Naive thymus-derived CD4-positive, alpha-beta T cell (primary cell): ENCODE measurements at regions of chr22 and their contacts with region 1.

Region 1: DNA sequence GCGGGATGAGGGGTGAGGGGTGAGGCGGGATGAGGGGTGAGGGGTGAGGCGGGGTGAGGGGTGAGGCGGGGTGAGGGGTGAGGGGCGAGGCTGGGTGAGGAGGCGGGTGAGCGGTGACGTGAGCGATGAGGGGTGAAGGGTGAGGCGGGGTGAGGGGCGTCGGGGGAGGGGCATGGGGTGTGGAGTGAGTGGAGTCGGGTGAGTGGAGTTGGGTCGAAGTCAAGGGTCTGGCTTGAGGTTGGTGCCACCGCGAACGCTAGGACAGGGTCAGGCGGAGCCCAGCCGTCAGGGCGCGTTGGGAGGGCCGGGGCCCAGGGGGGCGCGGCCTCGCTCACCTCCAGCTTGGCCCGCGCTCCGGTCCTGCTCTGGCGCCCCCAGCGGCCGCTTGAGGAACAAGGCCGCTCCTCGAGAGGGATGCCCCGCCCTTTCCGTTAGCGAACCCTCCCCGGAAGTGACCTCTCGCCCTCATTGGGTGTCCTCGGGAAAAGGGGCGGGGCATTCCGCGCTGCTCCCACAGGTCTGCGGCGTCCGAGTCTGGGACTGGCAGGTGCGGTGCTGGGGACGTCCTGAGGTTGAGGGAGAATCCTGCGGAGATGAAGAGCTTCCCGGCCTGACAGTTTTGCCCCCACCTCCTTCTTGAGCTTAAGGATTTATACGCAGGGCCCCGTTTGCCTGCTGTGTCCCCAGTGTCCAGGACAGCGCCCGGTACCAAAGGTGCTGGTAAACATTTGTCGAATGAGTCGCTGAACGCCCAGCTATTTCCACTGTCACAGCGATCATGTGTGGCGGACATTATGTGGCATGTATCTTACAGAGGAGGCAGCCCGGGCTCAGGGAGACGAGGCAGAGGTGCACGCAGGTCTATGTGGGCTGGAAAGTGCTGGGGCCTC is at the start of gene SYCE3:
- DNase-seq: peak; percentile 92 to 99 (median 96)
- ATAC-seq: peak; percentile 100
- H3K4me3 ChIP-seq: peak within 1 kb of the TSS; percentile 75
- H3K4me3 Mint-ChIP-seq: peak within 1 kb of the TSS; percentile 85 to 97 (median 94)
- H3K27ac ChIP-seq: peak within 1 kb of the TSS; percentile 67
- H3K27ac Mint-ChIP-seq: peak within 1 kb of the TSS; percentile 77 to 96 (median 87)
- H3K4me1 ChIP-seq: peaks cover 0 to 4% of the 10 kb centered on the region in 2 donors
- H3K4me1 Mint-ChIP-seq: peaks cover 6 to 24% (median 14%) of the 10 kb centered on the region in 7 donors
- H3K27me3 ChIP-seq: no peaks in the 10 kb centered on the region
- H3K27me3 Mint-ChIP-seq: peaks cover 0 to 14% (median 0%) of the 10 kb centered on the region in 5 donors
- total RNA-seq, gene SYCE3: not detected

Region 2: GRCh38 chr22:50185384-50186087 is 377.2 kb before region 1 on chr22 and contains the start of gene TRABD:
- CTCF ChIA-PET with region 1: no interaction called
- POLR2A ChIA-PET with region 1: no interaction called
- intact Hi-C with region 1: no loop called
- DNase-seq: peak; percentile 76 to 89 (median 86)
- ATAC-seq: peak; percentile 87
- H3K4me3 ChIP-seq: peak within 1 kb of the TSS; percentile 83
- H3K4me3 Mint-ChIP-seq: peak within 1 kb of the TSS; percentile 88 to 98 (median 94)
- H3K27ac ChIP-seq: peak within 1 kb of the TSS; percentile 78
- H3K27ac Mint-ChIP-seq: peak within 1 kb of the TSS; percentile 82 to 98 (median 96)
- H3K4me1 ChIP-seq: peaks cover 28 to 32% of the 10 kb centered on the region in 2 donors
- H3K4me1 Mint-ChIP-seq: peaks cover 10 to 37% (median 23%) of the 10 kb centered on the region in 7 donors
- H3K27me3 ChIP-seq: no peaks in the 10 kb centered on the region
- H3K27me3 Mint-ChIP-seq: peaks cover 0 to 6% (median 0%) of the 10 kb centered on the region in 5 donors
- total RNA-seq, gene TRABD: 106 to 157 (median 124) TPM

Region 3: GRCh38 chr22:50444663-50445062 is 118.1 kb before region 1 on chr22:
- CTCF ChIA-PET with region 1: no interaction called
- POLR2A ChIA-PET with region 1: no interaction called
- intact Hi-C with region 1: no loop called
- DNase-seq: no peak
- ATAC-seq: no peak
- H3K4me3 ChIP-seq: no peak overlapping the region
- H3K4me3 Mint-ChIP-seq: peak overlapping the region in 1 of 10 donors; percentile 69
- H3K27ac ChIP-seq: peak overlapping the region; percentile 55
- H3K27ac Mint-ChIP-seq: peak overlapping the region in 8 of 9 donors; percentile 32 to 84 (median 68)
- H3K4me1 ChIP-seq: peaks cover 9 to 20% of the 10 kb centered on the region in 2 donors
- H3K4me1 Mint-ChIP-seq: peaks cover 0 to 25% (median 19%) of the 10 kb centered on the region in 7 donors
- H3K27me3 ChIP-seq: no peaks in the 10 kb centered on the region
- H3K27me3 Mint-ChIP-seq: no peaks in the 10 kb centered on the region

Region 4: DNA sequence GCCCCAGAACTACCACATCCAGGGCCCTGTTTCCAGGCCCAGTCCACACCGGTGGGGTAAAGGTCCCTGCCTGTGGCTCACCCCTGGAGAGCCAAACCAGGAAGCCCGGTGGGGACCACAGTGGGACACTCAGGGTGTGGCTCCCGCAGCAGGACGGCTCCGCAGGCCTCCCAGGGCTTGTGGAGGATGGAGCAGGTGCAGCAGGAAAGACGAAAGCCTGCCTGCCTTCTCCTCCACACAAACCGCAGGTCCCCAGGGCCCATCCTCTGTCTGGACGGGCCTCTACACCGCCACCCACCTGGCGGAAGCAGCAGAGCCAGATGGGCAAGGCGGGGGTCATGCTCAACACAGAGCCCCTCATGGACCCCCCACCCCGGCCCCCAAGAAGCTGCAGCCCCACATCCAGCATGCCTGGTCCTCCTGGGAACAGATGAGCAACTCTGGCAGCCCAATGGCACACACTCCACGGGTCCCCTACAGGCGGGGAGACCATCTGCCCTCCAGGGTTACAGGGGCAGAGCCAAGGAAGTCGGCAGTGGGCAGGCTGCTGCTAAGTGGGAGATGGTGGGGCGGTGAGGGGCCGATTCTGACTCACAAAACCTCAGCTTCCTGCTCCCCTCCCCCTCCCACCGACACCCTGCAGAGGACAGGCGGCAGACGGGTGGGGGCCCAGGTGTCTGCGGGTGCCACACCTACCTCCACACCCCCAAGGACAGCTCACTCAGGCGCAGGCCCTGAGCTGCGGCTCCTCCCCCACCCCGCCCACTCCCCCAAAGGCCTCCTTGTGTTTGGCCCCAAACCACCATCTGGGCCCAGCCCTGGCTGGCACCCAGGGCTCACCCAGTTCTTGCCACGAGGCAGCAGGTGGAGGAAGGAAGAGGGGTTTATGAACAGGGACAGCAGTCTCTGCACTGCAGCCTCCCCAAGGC is 93.1 kb before region 1 on chr22:
- CTCF ChIA-PET with region 1: no interaction called
- POLR2A ChIA-PET with region 1: interaction called, 3 read pairs
- intact Hi-C with region 1: loop called in 1 of 2 experiments (anchors 2 kb)
- DNase-seq: peak; percentile 77 to 96 (median 92)
- ATAC-seq: peak; percentile 95
- H3K4me3 ChIP-seq: peak overlapping the region; percentile 65
- H3K4me3 Mint-ChIP-seq: peak overlapping the region; percentile 76 to 100 (median 90)
- H3K27ac ChIP-seq: peak overlapping the region; percentile 90
- H3K27ac Mint-ChIP-seq: peak overlapping the region; percentile 88 to 99 (median 93)
- H3K4me1 ChIP-seq: peaks cover 53 to 57% of the 10 kb centered on the region in 2 donors
- H3K4me1 Mint-ChIP-seq: peaks cover 45 to 69% (median 61%) of the 10 kb centered on the region in 7 donors
- H3K27me3 ChIP-seq: no peaks in the 10 kb centered on the region
- H3K27me3 Mint-ChIP-seq: no peaks in the 10 kb centered on the region

Region 5: DNA sequence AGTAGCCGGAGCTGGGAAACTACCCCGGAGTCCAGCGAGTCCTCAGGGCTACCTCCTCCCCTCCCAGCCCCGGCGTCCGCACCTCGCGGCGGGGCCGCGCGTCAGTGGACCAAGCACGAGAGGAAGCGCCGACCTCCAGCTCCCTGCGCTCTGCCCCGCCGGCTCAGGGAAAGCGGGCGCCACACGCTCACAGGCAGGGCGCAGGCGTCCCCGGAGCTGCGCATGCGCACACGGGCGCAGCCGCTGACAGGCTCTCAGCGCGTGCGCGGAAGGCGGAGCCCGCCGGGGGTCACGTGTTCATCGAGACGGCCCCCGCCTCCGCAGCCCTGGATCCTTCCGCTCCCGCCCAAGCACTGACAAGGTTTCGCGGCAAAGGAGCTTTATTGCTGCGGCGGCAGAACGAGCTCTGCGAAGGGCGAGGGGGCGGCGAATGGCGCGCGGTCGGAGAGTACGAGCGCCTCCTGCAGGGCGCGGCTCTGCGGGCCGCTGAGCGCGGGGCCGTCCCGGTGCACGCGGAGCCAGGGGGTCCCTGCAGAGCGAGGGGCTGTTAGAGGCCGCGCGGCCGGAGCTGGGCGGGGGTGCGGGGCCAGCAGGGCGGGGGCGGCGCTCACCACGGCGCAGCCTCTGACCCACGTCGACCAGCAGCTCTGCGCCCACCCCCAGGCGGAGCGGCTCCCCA is 37.2 kb before region 1 on chr22 and contains the start of gene SCO2:
- CTCF ChIA-PET with region 1: interaction called, 11 read pairs
- POLR2A ChIA-PET with region 1: interaction called, 24 read pairs
- intact Hi-C with region 1: loop called (anchors 1 kb)
- DNase-seq: peak; percentile 97 to 99 (median 98)
- ATAC-seq: peak; percentile 77
- H3K4me3 ChIP-seq: peak within 1 kb of the TSS; percentile 77
- H3K4me3 Mint-ChIP-seq: peak within 1 kb of the TSS; percentile 77 to 96 (median 89)
- H3K27ac ChIP-seq: peak within 1 kb of the TSS; percentile 87
- H3K27ac Mint-ChIP-seq: peak within 1 kb of the TSS; percentile 78 to 93 (median 86)
- H3K4me1 ChIP-seq: peaks cover 14 to 21% of the 10 kb centered on the region in 2 donors
- H3K4me1 Mint-ChIP-seq: peaks cover 8 to 33% (median 26%) of the 10 kb centered on the region in 7 donors
- H3K27me3 ChIP-seq: no peaks in the 10 kb centered on the region
- H3K27me3 Mint-ChIP-seq: peaks cover 0 to 6% (median 0%) of the 10 kb centered on the region in 5 donors
- total RNA-seq, gene SCO2: 2.2 to 12.0 (median 5.5) TPM

Region 6: GRCh38 chr22:50537765-50538164 is 25.0 kb before region 1 on chr22:
- CTCF ChIA-PET with region 1: interaction called, 4 read pairs
- POLR2A ChIA-PET with region 1: interaction called, 13 read pairs
- intact Hi-C with region 1: loop called in 1 of 2 experiments (anchors 2 kb)
- DNase-seq: no peak
- ATAC-seq: no peak
- H3K4me3 ChIP-seq: no peak overlapping the region
- H3K4me3 Mint-ChIP-seq: peak overlapping the region in 4 of 10 donors; percentile 5 to 65 (median 56)
- H3K27ac ChIP-seq: peak overlapping the region; percentile 99
- H3K27ac Mint-ChIP-seq: peak overlapping the region; percentile 74 to 100 (median 99)
- H3K4me1 ChIP-seq: peaks cover 14 to 24% of the 10 kb centered on the region in 2 donors
- H3K4me1 Mint-ChIP-seq: peaks cover 29 to 79% (median 41%) of the 10 kb centered on the region in 7 donors
- H3K27me3 ChIP-seq: no peaks in the 10 kb centered on the region
- H3K27me3 Mint-ChIP-seq: peaks cover 0 to 2% (median 0%) of the 10 kb centered on the region in 5 donors

Region 7: DNA sequence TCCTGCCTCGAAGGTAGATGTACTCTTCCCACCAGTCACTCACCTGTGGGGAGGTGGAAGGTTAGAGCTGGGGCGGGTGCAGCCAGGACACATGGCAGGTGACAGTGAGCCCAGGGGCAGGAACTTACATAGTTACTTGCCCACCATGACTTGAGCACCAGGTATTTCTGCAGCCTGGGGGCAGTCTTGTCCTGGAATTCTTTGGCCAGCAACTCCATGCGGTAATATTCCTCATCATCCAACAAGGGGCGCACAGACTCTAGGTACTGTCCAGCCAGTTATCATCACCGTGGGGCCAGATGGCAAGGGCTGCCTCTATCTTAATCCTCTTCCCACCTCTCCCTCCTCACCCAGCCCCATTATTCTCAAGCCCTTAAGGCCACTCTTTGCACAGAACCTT is 13.3 kb after region 1 on chr22:
- CTCF ChIA-PET with region 1: interaction called, 3 read pairs
- POLR2A ChIA-PET with region 1: interaction called, 33 read pairs
- intact Hi-C with region 1: no loop called
- DNase-seq: no peak
- ATAC-seq: no peak
- H3K4me3 ChIP-seq: no peak overlapping the region
- H3K4me3 Mint-ChIP-seq: no peak overlapping the region
- H3K27ac ChIP-seq: no peak overlapping the region
- H3K27ac Mint-ChIP-seq: no peak overlapping the region
- H3K4me1 ChIP-seq: no peaks in the 10 kb centered on the region
- H3K4me1 Mint-ChIP-seq: peaks cover 5 to 18% (median 13%) of the 10 kb centered on the region in 7 donors
- H3K27me3 ChIP-seq: no peaks in the 10 kb centered on the region
- H3K27me3 Mint-ChIP-seq: no peaks in the 10 kb centered on the region

Region 8: GRCh38 chr22:50627642-50628542 is 65.1 kb after region 1 on chr22 and contains the start of gene ARSA:
- CTCF ChIA-PET with region 1: no interaction called
- POLR2A ChIA-PET with region 1: no interaction called
- intact Hi-C with region 1: loop called in 1 of 2 experiments (anchors 1 kb)
- DNase-seq: peak; percentile 63 to 82 (median 77)
- ATAC-seq: peak; percentile 95
- H3K4me3 ChIP-seq: peak within 1 kb of the TSS; percentile 77
- H3K4me3 Mint-ChIP-seq: peak within 1 kb of the TSS; percentile 87 to 99 (median 92)
- H3K27ac ChIP-seq: peak within 1 kb of the TSS; percentile 90
- H3K27ac Mint-ChIP-seq: peak within 1 kb of the TSS; percentile 75 to 98 (median 91)
- H3K4me1 ChIP-seq: peaks cover 15 to 18% of the 10 kb centered on the region in 2 donors
- H3K4me1 Mint-ChIP-seq: peaks cover 19 to 30% (median 23%) of the 10 kb centered on the region in 7 donors
- H3K27me3 ChIP-seq: no peaks in the 10 kb centered on the region
- H3K27me3 Mint-ChIP-seq: no peaks in the 10 kb centered on the region
- total RNA-seq, gene ARSA: 64.3 to 96.3 (median 68.7) TPM